ENCODE measurements at regions of chr5 and their contacts with region 1.

Region 1: GRCh38 chr5:171913987-171914273 is 92.5 kb downstream of the FBXW11 start:
- DNase-seq: no peak
- H3K4me3 ChIP-seq: no peak overlapping the region
- H3K27ac ChIP-seq: no peak overlapping the region
- H3K4me1 ChIP-seq: peaks cover 0 to 32% of the 10 kb centered on the region in 2 donors
- H3K27me3 ChIP-seq: no peaks in the 10 kb centered on the region
- CTCF ChIP-seq: no peak
- POLR2A ChIP-seq: no peak

Region 2: GRCh38 chr5:172006321-172007174 is 92.6 kb after region 1 on chr5 and contains the start of gene FBXW11:
- intact Hi-C with region 1: loop called in 1 of 2 experiments (anchors 10 kb)
- DNase-seq: peak; percentile 95 to 98 (median 98)
- H3K4me3 ChIP-seq: peak within 1 kb of the TSS; percentile 43 to 87 (median 77)
- H3K27ac ChIP-seq: peak within 1 kb of the TSS; percentile 91 to 98 (median 97)
- H3K4me1 ChIP-seq: peaks cover 37 to 44% of the 10 kb centered on the region in 2 donors
- H3K27me3 ChIP-seq: no peaks in the 10 kb centered on the region
- CTCF ChIP-seq: no peak
- POLR2A ChIP-seq: peak; percentile 77 to 89
- total RNA-seq, gene FBXW11: 41.7 to 89.0 (median 63.7) TPM

Region 3: GRCh38 chr5:172038167-172038566 is 124.2 kb after region 1 on chr5:
- intact Hi-C with region 1: loop called (anchors 2 to 10 kb)
- DNase-seq: no peak
- H3K4me3 ChIP-seq: no peak overlapping the region
- H3K27ac ChIP-seq: no peak overlapping the region
- H3K4me1 ChIP-seq: no peaks in the 10 kb centered on the region
- H3K27me3 ChIP-seq: no peaks in the 10 kb centered on the region
- CTCF ChIP-seq: no peak
- POLR2A ChIP-seq: no peak

Region 4: GRCh38 chr5:172044631-172045314 is 130.8 kb after region 1 on chr5:
- intact Hi-C with region 1: loop called (anchors 2 to 10 kb)
- DNase-seq: no peak
- H3K4me3 ChIP-seq: no peak overlapping the region
- H3K27ac ChIP-seq: no peak overlapping the region
- H3K4me1 ChIP-seq: peaks cover 0 to 8% of the 10 kb centered on the region in 2 donors
- H3K27me3 ChIP-seq: no peaks in the 10 kb centered on the region
- CTCF ChIP-seq: no peak
- POLR2A ChIP-seq: no peak

Measured in adrenal gland (tissue), 19 donors.